PC-3 (cell line): ENCODE measurements at regions of chr9 and their contacts with region 1.

Region 1: DNA sequence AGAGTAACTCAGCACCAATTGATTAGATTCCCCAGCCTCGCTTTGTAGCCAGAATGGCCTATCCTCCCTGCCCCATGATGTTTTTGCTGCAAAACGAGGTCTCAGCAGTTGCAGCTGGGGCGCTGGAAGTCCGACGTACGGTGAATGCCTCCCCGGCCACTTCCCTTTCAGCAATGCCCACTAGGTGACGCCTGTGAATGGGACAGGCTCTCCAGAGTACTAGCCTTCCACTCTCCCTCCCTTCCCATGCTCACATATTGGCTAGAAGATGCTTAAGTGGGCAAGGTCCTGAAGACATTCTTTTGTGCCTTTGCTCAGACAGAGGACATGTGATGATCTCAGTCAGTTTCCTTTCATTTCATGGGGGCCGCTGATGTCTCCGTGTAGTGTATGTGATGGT is 50.8 kb downstream of the DMRT2 start:
- DNase-seq: peak; percentile 65
- ATAC-seq: peak; percentile 87
- H3K4me3 ChIP-seq: no peak overlapping the region
- H3K27ac ChIP-seq: peak overlapping the region; percentile 64
- H3K4me1 ChIP-seq: peaks cover 10% of the 10 kb centered on the region
- H3K27me3 ChIP-seq: no peaks in the 10 kb centered on the region
- CTCF ChIP-seq: peak; percentile 71

Region 2: DNA sequence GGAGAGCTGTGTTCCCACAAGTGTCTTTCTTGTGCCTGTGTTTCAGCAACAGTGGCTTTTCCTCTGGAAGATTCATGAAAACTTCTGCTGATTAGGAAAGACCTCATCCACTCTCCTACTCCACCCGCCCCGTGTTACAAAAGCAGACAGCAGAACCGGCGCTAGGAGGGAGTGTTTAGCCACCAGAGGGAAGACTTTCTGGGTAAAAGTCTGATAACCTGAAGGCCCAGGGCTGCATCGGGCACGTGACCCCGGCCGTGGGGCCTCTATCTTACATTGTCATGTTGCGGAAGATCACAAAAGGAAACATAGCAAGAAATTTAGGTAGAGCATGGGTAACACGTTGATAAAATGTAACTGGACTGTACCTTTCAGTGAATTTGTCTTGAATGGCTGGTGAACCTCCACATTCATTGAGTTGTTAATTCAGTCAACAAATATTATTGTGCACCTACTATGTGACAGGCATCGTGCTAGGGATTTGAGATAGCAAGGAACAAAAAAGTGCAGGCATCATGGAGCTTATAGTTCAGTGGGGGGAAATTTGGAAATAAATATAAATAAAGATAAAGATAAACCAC is 82.7 kb before region 1 on chr9:
- CTCF ChIA-PET with region 1: no interaction called
- POLR2A ChIA-PET with region 1: no interaction called
- intact Hi-C with region 1: loop called (anchors 2 kb)
- DNase-seq: peak; percentile 63
- ATAC-seq: peak; percentile 85
- H3K4me3 ChIP-seq: no peak overlapping the region
- H3K27ac ChIP-seq: no peak overlapping the region
- H3K4me1 ChIP-seq: no peaks in the 10 kb centered on the region
- H3K27me3 ChIP-seq: no peaks in the 10 kb centered on the region
- CTCF ChIP-seq: peak; percentile 80

Region 3: GRCh38 chr9:1055141-1055540 is 45.8 kb before region 1 on chr9:
- CTCF ChIA-PET with region 1: no interaction called
- POLR2A ChIA-PET with region 1: no interaction called
- intact Hi-C with region 1: loop called (anchors 1 kb)
- DNase-seq: peak; percentile 88
- ATAC-seq: peak; percentile 89
- H3K4me3 ChIP-seq: peak overlapping the region; percentile 19; the same call in 1 of the 2 replicates
- H3K27ac ChIP-seq: peak overlapping the region; percentile 90
- H3K4me1 ChIP-seq: peaks cover 46% of the 10 kb centered on the region
- H3K27me3 ChIP-seq: no peaks in the 10 kb centered on the region
- CTCF ChIP-seq: no peak

Region 4: GRCh38 chr9:1125741-1126140 is 24.8 kb after region 1 on chr9:
- CTCF ChIA-PET with region 1: no interaction called
- POLR2A ChIA-PET with region 1: no interaction called
- intact Hi-C with region 1: no loop called
- DNase-seq: peak; percentile 80
- ATAC-seq: peak; percentile 99
- H3K4me3 ChIP-seq: no peak overlapping the region
- H3K27ac ChIP-seq: peak overlapping the region; percentile 75
- H3K4me1 ChIP-seq: peaks cover 14% of the 10 kb centered on the region
- H3K27me3 ChIP-seq: no peaks in the 10 kb centered on the region
- CTCF ChIP-seq: no peak

Region 5: DNA sequence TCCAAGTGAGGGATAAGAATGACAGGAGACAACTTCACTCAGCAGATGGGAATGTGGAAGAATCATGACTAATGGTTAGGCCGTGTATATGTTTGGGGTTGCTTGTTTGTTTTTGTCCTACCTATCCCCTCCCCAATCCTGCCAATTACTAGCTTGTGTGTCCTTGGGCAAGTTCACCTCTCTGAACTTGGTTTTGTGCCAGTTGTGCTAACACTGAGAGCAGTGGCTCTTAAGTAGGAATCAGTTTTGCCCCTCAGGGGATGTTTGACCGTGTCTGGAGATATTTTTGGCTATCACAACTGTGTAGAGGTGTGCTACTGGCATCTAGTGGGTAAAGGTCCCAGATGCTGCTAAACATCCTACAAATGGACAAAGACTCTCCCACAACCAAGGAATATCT is 236.2 kb after region 1 on chr9:
- CTCF ChIA-PET with region 1: interaction called, 4 read pairs
- POLR2A ChIA-PET with region 1: no interaction called
- intact Hi-C with region 1: loop called (anchors 1 kb)
- DNase-seq: peak; percentile 96
- ATAC-seq: peak; percentile 97
- H3K4me3 ChIP-seq: no peak overlapping the region
- H3K27ac ChIP-seq: no peak overlapping the region
- H3K4me1 ChIP-seq: peaks cover 18% of the 10 kb centered on the region
- H3K27me3 ChIP-seq: no peaks in the 10 kb centered on the region
- CTCF ChIP-seq: peak; percentile 65

Region 6: DNA sequence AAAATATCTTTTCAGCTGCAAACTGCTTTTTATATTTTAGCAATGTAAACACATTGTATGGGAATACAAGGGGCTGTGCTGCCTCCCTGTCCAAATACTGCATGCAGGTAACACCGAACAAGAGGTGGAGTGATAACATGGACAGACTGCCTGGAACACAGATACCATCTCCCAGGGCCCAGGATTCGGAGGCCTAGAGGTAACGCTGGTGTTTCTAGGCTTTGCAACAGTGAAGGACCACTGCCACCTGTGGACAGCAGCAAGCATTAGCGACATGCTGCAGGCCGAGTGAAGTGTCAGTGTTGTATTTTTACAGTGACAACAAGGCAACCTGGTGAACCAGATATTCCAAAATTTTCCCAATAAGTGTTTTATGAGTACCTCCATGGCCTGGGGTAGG is 328.4 kb after region 1 on chr9:
- CTCF ChIA-PET with region 1: no interaction called
- POLR2A ChIA-PET with region 1: no interaction called
- intact Hi-C with region 1: loop called (anchors 1 kb)
- DNase-seq: peak; percentile 45
- ATAC-seq: peak; percentile 74
- H3K4me3 ChIP-seq: no peak overlapping the region
- H3K27ac ChIP-seq: no peak overlapping the region
- H3K4me1 ChIP-seq: no peaks in the 10 kb centered on the region
- H3K27me3 ChIP-seq: peaks cover 17% of the 10 kb centered on the region
- CTCF ChIP-seq: peak; percentile 53

Region 7: GRCh38 chr9:2014696-2015580 is 914.0 kb after region 1 on chr9 and contains the start of gene SMARCA2:
- CTCF ChIA-PET with region 1: no interaction called
- POLR2A ChIA-PET with region 1: no interaction called
- intact Hi-C with region 1: loop called (anchors 5 kb)
- DNase-seq: peak; percentile 93
- ATAC-seq: peak; percentile 73
- H3K4me3 ChIP-seq: peak within 1 kb of the TSS; percentile 84
- H3K27ac ChIP-seq: peak within 1 kb of the TSS; percentile 34
- H3K4me1 ChIP-seq: peaks cover 16% of the 10 kb centered on the region
- H3K27me3 ChIP-seq: no peaks in the 10 kb centered on the region
- CTCF ChIP-seq: no peak
- total RNA-seq, gene SMARCA2: 27.9 and 36.4 TPM in 2 replicates